Panc1 (cell line): ENCODE measurements at regions of chr10 and their contacts with region 1.

Region 1: DNA sequence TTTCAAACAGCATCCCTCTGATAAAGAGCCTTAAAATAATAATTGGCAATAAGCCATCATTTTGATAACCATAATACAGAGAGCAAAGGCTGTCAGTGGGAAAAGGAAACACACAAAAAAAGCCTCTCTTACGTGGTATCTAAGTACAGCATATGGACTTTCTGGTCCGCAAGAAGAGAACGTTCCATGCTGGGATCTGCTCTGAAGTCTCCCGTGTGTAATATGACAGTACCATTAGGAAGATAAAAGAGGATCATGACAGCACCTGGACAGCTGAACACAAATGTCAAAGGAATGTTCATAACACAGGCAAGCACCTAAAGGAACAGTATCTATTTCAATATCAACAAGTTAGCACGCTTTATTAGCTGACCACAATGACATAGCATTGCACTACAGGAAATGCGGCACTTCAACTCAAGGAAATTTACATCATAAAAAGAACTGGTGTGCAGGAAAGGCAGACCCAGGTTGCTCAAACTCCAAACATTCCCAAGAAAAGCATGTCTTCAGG is 9.9 kb downstream of the DCLRE1A start:
- DNase-seq: no peak
- ATAC-seq: no peak
- H3K4me3 ChIP-seq: no peak overlapping the region
- H3K27ac ChIP-seq: no peak overlapping the region
- H3K4me1 ChIP-seq: no peaks in the 10 kb centered on the region
- H3K27me3 ChIP-seq: no peaks in the 10 kb centered on the region
- CTCF ChIP-seq: no peak

Region 2: GRCh38 chr10:113704637-113705343 is 139.2 kb before region 1 on chr10:
- CTCF ChIA-PET with region 1: no interaction called
- POLR2A ChIA-PET with region 1: no interaction called
- in situ Hi-C with region 1: no loop called
- intact Hi-C with region 1: loop called (anchors 10 kb)
- DNase-seq: peak; percentile 12
- ATAC-seq: peak; percentile 81
- H3K4me3 ChIP-seq: no peak overlapping the region
- H3K27ac ChIP-seq: no peak overlapping the region
- H3K4me1 ChIP-seq: no peaks in the 10 kb centered on the region
- H3K27me3 ChIP-seq: no peaks in the 10 kb centered on the region
- CTCF ChIP-seq: peak; percentile 87